ENCODE measurements at regions of chr1 and their contacts with region 1.

Region 1: GRCh38 chr1:155978325-155978972 is at the start of gene ARHGEF2:
- DNase-seq: peak; percentile 78 to 90
- H3K4me3 ChIP-seq: peak within 1 kb of the TSS; percentile 77 to 97 (median 90)
- H3K27ac ChIP-seq: peak within 1 kb of the TSS; percentile 88
- H3K4me1 ChIP-seq: peaks cover 31 to 49% (median 33%) of the 10 kb centered on the region in 4 experiments
- H3K27me3 ChIP-seq: no peaks in the 10 kb centered on the region
- CTCF ChIP-seq: peak; percentile 56 to 67 (median 65)
- EP300 ChIP-seq: no peak; a peak in 1 of 3 replicates
- POLR2A ChIP-seq: peak; percentile 55 to 63
- RAD21 ChIP-seq: peak; percentile 38 to 56
- total RNA-seq, gene ARHGEF2: 68.3 and 80.5 TPM in 2 replicates

Region 2: DNA sequence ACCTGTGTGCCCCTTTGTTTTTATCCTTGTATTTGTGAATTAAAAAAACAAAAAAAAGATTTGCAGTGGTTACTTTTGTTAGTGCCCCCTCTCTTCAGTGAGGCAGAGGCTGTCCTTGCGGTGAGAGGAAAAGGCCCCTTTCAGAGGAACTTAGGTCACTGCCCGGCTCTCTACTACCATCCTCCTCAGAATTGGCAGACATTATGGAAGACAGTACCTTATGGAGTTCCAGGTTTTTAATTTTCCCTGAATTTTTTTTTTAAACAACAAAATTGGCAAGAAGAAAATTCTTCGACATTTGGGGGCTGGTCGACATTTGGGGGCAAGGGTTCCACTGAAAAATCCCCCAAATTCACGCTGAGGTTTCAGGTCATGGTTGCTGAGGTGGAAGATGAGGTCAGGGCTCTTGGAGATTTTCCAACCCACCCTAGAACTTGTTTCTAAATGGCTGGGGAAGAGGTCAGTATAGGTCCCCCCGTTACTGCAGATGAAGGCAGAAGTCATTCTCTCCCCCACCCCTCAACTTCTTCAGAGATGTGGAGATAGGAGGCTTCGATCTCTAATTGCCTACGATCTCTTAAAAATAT is 31.7 kb before region 1 on chr1:
- CTCF ChIA-PET with region 1: interaction called, 11 read pairs
- POLR2A ChIA-PET with region 1: interaction called, 39 read pairs
- DNase-seq: no peak
- H3K4me3 ChIP-seq: no peak overlapping the region
- H3K27ac ChIP-seq: no peak overlapping the region
- H3K4me1 ChIP-seq: peaks cover 0 to 8% (median 4%) of the 10 kb centered on the region in 4 experiments; a peak in 4 of 7 replicates
- H3K27me3 ChIP-seq: no peaks in the 10 kb centered on the region
- CTCF ChIP-seq: no peak
- EP300 ChIP-seq: no peak
- POLR2A ChIP-seq: no peak
- RAD21 ChIP-seq: no peak

Region 3: DNA sequence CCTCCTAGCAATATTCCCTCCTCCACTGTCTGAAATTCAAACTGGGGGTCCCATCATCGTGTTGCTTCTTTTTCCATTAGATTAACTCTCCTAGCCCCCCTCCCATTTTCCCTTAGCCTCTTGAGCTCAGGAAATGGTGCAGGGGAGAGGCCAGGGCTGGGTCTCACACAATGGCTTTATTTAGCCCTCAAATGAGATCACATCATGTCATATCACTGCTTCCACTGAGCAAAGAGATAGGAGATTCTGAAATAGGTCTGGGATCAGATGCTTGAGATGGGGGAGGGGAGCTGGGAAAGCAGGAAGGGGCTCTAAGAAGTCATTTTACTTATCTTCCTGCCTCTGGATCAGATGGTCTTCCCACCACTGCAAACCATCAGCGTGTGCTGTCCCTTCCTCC is 17.7 kb after region 1 on chr1:
- CTCF ChIA-PET with region 1: interaction called, 126 read pairs
- POLR2A ChIA-PET with region 1: interaction called, 282 read pairs
- DNase-seq: no peak
- H3K4me3 ChIP-seq: no peak overlapping the region
- H3K27ac ChIP-seq: no peak overlapping the region
- H3K4me1 ChIP-seq: no peaks in the 10 kb centered on the region
- H3K27me3 ChIP-seq: no peaks in the 10 kb centered on the region
- CTCF ChIP-seq: no peak
- EP300 ChIP-seq: no peak
- POLR2A ChIP-seq: no peak
- RAD21 ChIP-seq: no peak

Region 4: DNA sequence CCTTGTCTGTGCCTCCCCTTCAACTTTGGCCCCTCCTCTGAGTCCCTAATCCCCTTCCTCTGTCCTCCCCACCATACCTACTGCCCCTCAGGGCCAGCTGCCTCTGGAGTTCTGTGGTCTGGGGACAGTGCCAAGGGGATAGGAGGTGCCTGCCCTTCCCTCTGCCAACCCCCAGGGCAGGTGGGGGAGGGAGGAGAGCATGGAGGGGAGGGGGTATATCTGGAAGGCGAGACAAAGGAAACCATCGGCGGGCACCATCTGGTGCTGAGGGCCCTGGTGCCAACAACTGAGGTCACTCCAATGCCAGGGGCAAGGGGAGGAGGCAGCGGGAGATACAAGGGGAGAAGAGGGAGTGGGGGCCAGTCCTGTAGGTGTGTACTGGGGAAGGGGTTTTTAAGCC is 92.1 kb after region 1 on chr1:
- CTCF ChIA-PET with region 1: interaction called, 16 read pairs
- POLR2A ChIA-PET with region 1: interaction called, 5 read pairs
- DNase-seq: no peak
- H3K4me3 ChIP-seq: no peak overlapping the region
- H3K27ac ChIP-seq: no peak overlapping the region
- H3K4me1 ChIP-seq: peaks cover 12 to 33% (median 24%) of the 10 kb centered on the region in 4 experiments; a peak in 6 of 7 replicates
- H3K27me3 ChIP-seq: no peaks in the 10 kb centered on the region
- CTCF ChIP-seq: no peak
- EP300 ChIP-seq: no peak
- POLR2A ChIP-seq: no peak
- RAD21 ChIP-seq: no peak

Region 5: DNA sequence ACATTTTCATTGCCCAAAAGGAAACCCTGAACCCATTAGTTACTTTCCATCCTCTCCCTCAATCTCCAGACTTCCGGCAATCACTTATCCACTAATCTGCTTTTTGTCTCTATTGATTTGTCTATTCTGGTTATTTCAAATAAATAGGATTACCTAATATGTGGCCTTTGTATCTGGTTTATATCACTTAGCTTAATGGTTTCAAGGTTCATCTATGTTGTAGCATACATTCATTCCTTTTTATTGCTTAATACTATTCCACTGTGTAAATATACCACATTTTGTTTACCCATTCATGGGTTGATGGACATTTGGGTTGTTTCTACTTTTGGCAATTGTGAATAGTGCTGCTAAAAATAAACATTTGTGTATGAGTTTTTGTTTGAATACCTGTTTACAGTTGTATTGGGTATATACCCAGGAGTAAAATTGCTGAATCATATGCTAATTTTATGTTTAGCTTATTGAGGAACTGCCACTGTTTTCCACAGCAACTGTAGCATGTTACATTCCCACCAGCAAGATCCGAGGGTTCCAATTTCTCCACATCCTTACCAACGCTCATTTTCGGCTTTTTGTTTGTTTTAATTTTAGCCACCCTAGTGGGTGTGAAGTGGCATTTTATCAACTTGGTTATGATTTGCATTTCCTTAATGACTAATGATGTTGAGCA is 213.0 kb after region 1 on chr1:
- CTCF ChIA-PET with region 1: no interaction called
- POLR2A ChIA-PET with region 1: no interaction called
- DNase-seq: no peak
- H3K4me3 ChIP-seq: no peak overlapping the region
- H3K27ac ChIP-seq: no peak overlapping the region
- H3K4me1 ChIP-seq: peaks cover under 1 to 11% (median 4%) of the 10 kb centered on the region in 4 experiments; a peak in 5 of 7 replicates
- H3K27me3 ChIP-seq: no peaks in the 10 kb centered on the region
- CTCF ChIP-seq: no peak
- EP300 ChIP-seq: no peak
- POLR2A ChIP-seq: no peak
- RAD21 ChIP-seq: no peak

Measured in H1 (cell line).